CD4-positive, alpha-beta T cell (primary cell): ENCODE measurements at regions of chr11 and their contacts with region 1.

Region 1: GRCh38 chr11:121464352-121464946 is 11.7 kb upstream of the SORL1-AS1 start:
- DNase-seq: peak; percentile 40 to 86 (median 70)
- ATAC-seq: peak; percentile 67
- H3K4me3 ChIP-seq: peak overlapping the region; percentile 26
- H3K4me3 Mint-ChIP-seq: peak overlapping the region; percentile 64
- H3K27ac ChIP-seq: peak overlapping the region; percentile 66 to 70
- H3K27ac Mint-ChIP-seq: peak overlapping the region; percentile 93
- H3K4me1 ChIP-seq: peaks cover 96% of the 10 kb centered on the region
- H3K4me1 Mint-ChIP-seq: peaks cover 98% of the 10 kb centered on the region
- H3K27me3 ChIP-seq: no peaks in the 10 kb centered on the region
- H3K27me3 Mint-ChIP-seq: no peaks in the 10 kb centered on the region
- CTCF ChIP-seq: no peak

Region 2: GRCh38 chr11:121292495-121293287 is 171.8 kb before region 1 on chr11 and contains the start of gene SC5D:
- CTCF ChIA-PET with region 1: no interaction called
- POLR2A ChIA-PET with region 1: interaction called, 14 read pairs
- intact Hi-C with region 1: loop called in 1 of 2 experiments (anchors 5 kb)
- DNase-seq: peak; percentile 88 to 98 (median 94)
- ATAC-seq: peak; percentile 82
- H3K4me3 ChIP-seq: peak within 1 kb of the TSS; percentile 84
- H3K4me3 Mint-ChIP-seq: peak within 1 kb of the TSS; percentile 92
- H3K27ac ChIP-seq: peak within 1 kb of the TSS; percentile 93 to 96
- H3K27ac Mint-ChIP-seq: peak within 1 kb of the TSS; percentile 99
- H3K4me1 ChIP-seq: peaks cover 12% of the 10 kb centered on the region
- H3K4me1 Mint-ChIP-seq: peaks cover 67% of the 10 kb centered on the region
- H3K27me3 ChIP-seq: no peaks in the 10 kb centered on the region
- H3K27me3 Mint-ChIP-seq: no peaks in the 10 kb centered on the region
- CTCF ChIP-seq: no peak
- total RNA-seq, gene SC5D: 87.7 to 92.7 TPM

Region 3: GRCh38 chr11:121351083-121351630 is 113.3 kb before region 1 on chr11:
- CTCF ChIA-PET with region 1: no interaction called
- POLR2A ChIA-PET with region 1: no interaction called
- intact Hi-C with region 1: no loop called
- DNase-seq: no peak
- ATAC-seq: no peak
- H3K4me3 ChIP-seq: no peak overlapping the region
- H3K4me3 Mint-ChIP-seq: no peak overlapping the region
- H3K27ac ChIP-seq: no peak overlapping the region
- H3K27ac Mint-ChIP-seq: no peak overlapping the region
- H3K4me1 ChIP-seq: no peaks in the 10 kb centered on the region
- H3K4me1 Mint-ChIP-seq: peaks cover 4% of the 10 kb centered on the region
- H3K27me3 ChIP-seq: no peaks in the 10 kb centered on the region
- H3K27me3 Mint-ChIP-seq: no peaks in the 10 kb centered on the region
- CTCF ChIP-seq: no peak

Region 4: DNA sequence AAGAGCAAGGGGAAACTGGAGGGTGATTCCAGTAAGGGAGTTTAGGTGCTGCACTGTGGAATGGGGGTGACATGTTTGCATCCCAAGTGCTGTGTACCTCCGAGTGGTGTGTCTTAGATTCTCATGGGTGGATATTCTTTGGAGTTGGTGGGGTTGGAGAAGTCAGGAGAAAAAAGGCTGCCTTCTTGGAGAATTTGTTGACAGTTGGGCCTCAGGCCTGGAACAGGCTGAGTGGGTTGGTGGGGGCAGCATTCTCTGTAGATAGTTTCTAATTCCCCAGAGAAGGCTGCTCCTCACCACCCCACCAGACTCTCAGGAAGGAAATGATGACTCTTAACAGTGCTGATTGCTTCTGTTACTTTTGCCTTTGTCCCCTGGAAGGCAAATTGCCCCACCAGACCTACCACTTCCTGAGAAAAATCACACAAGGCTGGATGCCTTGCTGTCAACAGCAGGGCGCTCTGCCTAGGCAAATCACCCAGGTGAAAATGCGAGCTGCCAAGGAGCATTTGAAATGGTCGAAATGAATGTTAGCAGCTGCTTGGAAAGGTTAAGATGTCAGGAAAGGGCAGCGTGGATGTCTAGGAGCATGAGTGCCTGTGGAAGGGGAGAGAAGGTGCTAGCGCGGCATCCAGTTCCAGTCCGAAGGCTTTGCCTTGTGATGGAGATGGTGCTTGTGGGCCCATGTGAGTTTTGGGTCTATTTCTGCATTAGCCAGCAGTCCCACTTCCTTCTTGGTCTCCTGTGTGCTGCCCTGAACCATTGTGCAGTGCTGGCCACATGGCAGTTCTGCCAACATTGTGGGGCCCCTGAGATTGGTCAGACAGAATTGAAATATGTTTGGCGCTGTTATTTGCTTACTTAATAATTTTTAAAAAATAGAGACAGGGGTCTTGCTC is 18.0 kb after region 1 on chr11:
- CTCF ChIA-PET with region 1: interaction called, 7 read pairs
- POLR2A ChIA-PET with region 1: interaction called, 11 read pairs
- intact Hi-C with region 1: loop called in 1 of 2 experiments (anchors 1 kb)
- DNase-seq: peak; percentile 29 to 89 (median 60)
- ATAC-seq: peak; percentile 80
- H3K4me3 ChIP-seq: peak overlapping the region; percentile 27
- H3K4me3 Mint-ChIP-seq: peak overlapping the region; percentile 75
- H3K27ac ChIP-seq: peak overlapping the region; percentile 69 to 71
- H3K27ac Mint-ChIP-seq: peak overlapping the region; percentile 89
- H3K4me1 ChIP-seq: peaks cover 65% of the 10 kb centered on the region
- H3K4me1 Mint-ChIP-seq: peaks cover 71% of the 10 kb centered on the region
- H3K27me3 ChIP-seq: no peaks in the 10 kb centered on the region
- H3K27me3 Mint-ChIP-seq: no peaks in the 10 kb centered on the region
- CTCF ChIP-seq: no peak

Region 5: DNA sequence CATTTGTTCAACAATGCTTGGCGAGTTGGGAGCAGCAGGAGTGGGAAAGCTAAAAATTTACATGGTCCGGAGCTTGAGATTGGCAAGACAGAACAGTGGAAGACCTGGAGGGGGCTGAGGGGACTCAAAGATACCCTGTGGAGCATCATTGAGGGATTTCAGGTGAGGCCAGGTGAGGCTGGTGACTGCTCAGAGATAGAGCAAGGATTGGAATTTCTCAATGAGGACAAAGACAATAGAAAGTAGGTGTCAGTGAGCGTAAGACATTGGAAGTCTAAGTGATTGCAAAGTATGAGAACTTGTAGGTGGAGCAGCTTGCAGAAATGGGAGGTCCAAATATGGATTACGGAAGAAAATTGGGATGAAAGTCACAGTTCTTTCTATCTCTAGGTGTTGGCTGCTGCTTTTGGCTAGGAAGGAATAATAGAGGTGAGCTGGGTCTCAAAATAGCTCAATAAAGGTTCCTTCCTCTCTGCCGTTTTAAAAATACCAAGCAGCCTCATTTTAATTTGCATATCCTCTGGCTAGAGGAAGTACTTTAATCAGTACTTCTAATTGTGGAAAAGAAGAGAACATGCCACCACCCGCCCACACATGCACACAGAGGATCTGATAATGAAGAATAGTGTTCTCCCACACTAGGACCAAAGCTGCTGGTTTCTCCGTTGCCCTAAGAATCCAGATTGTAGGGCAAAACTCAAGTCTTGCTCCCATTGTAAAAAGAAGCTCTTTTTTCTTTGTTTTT is 30.1 kb after region 1 on chr11:
- CTCF ChIA-PET with region 1: no interaction called
- POLR2A ChIA-PET with region 1: interaction called, 23 read pairs
- intact Hi-C with region 1: no loop called
- DNase-seq: peak in 4 of 14 experiments; percentile 24 to 52 (median 37)
- ATAC-seq: peak; percentile 77
- H3K4me3 ChIP-seq: no peak overlapping the region
- H3K4me3 Mint-ChIP-seq: peak overlapping the region; percentile 4
- H3K27ac ChIP-seq: peak overlapping the region in 1 of 2 donors; percentile 15
- H3K27ac Mint-ChIP-seq: peak overlapping the region; percentile 76
- H3K4me1 ChIP-seq: peaks cover 16% of the 10 kb centered on the region
- H3K4me1 Mint-ChIP-seq: peaks cover 68% of the 10 kb centered on the region
- H3K27me3 ChIP-seq: no peaks in the 10 kb centered on the region
- H3K27me3 Mint-ChIP-seq: no peaks in the 10 kb centered on the region
- CTCF ChIP-seq: no peak